ENCODE measurements at regions of chr5 and their contacts with region 1.

Region 1: GRCh38 chr5:141878711-141879425 is 658 bp upstream of the PCDH1 start:
- DNase-seq: peak; percentile 74 to 91
- ATAC-seq: peak; percentile 65 to 89
- H3K4me3 ChIP-seq: peak overlapping the region; percentile 64
- H3K27ac ChIP-seq: peak overlapping the region; percentile 41 to 83; a peak in 4 of 6 replicates
- H3K4me1 ChIP-seq: peaks cover 22% of the 10 kb centered on the region
- CTCF ChIP-seq: peak; percentile 97
- EP300 ChIP-seq: no peak
- POLR2A ChIP-seq: no peak
- RAD21 ChIP-seq: peak; percentile 94

Region 2: GRCh38 chr5:141664732-141665461 is 214.0 kb before region 1 on chr5:
- CTCF ChIA-PET with region 1: interaction called, 30 read pairs
- POLR2A ChIA-PET with region 1: no interaction called
- DNase-seq: peak; percentile 69 to 78
- ATAC-seq: peak; percentile 89 to 97
- H3K4me3 ChIP-seq: no peak overlapping the region
- H3K27ac ChIP-seq: no peak overlapping the region
- H3K4me1 ChIP-seq: peaks cover 4% of the 10 kb centered on the region; the same call in 1 of the 3 replicates
- CTCF ChIP-seq: peak; percentile 91
- EP300 ChIP-seq: no peak
- POLR2A ChIP-seq: no peak
- RAD21 ChIP-seq: peak; percentile 84

Region 3: GRCh38 chr5:141722266-141722665 is 156.6 kb before region 1 on chr5:
- CTCF ChIA-PET with region 1: interaction called, 22 read pairs
- POLR2A ChIA-PET with region 1: no interaction called
- DNase-seq: no peak
- ATAC-seq: no peak
- H3K4me3 ChIP-seq: no peak overlapping the region
- H3K27ac ChIP-seq: no peak overlapping the region
- H3K4me1 ChIP-seq: peaks cover 9% of the 10 kb centered on the region; the same call in 2 of the 3 replicates
- CTCF ChIP-seq: no peak
- EP300 ChIP-seq: no peak
- POLR2A ChIP-seq: no peak
- RAD21 ChIP-seq: no peak

Region 4: DNA sequence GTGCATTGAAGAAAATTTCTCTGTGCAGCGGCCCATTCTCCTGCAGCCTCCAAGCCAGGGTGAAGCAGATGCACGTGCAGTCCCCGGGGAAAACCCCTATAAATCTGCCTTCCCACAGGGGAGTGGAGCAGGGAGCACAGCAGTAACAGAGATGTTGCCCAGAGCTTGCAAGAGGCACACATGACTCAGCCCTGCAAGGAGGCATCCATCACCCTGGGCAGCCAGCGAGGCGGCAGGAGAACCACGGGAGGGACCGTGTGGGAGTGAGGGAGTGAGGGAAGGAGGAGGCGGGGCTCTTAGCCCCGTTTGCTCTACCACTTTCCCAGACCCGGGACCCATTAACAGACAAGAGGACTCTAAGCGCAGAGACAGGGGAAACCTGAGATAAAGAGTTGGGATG is 100.7 kb before region 1 on chr5:
- CTCF ChIA-PET with region 1: interaction called, 22 read pairs
- POLR2A ChIA-PET with region 1: no interaction called
- DNase-seq: peak in 1 of 2 experiments; percentile 17
- ATAC-seq: peak; percentile 64 to 71
- H3K4me3 ChIP-seq: no peak overlapping the region
- H3K27ac ChIP-seq: no peak overlapping the region
- H3K4me1 ChIP-seq: peaks cover 20% of the 10 kb centered on the region; the same call in 2 of the 3 replicates
- CTCF ChIP-seq: no peak
- EP300 ChIP-seq: no peak
- POLR2A ChIP-seq: no peak
- RAD21 ChIP-seq: no peak

Region 5: DNA sequence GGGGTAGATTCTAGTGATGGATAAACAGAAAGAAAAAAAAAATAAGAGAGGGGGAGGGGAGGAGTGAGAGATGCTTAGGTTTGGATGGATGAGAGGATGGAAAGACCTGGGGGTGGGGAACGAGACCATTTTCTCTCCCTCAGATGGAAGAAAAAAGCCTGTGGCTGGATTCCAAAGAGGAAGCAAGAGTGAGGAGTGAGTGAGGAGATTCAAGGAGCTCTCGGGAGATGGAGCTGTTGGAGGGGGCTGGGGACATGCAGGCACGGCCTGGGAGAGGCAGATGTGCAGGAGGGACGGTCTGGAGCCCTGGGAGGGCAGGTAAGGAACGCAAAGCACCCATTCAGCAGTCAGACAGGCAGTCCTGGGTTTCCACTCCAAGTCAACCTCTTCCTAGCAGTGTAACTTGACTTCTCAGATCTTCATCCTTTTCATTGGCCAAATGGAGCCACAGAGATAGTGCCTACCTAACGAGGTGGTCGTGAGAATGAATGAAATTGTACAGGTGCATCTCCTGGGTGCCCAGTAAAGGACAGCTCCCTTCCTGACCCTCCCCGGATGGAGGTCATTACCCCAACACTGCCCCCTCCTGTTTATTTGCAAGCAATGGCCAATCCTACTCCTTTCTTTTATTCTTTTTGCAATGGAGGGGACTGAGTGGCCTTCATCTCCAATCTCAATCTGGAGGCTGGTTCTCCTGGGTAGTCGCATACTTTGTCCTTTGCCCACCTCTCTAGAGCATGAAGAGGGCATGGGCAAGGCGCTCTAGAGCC is 52.9 kb before region 1 on chr5:
- CTCF ChIA-PET with region 1: interaction called, 15 read pairs
- POLR2A ChIA-PET with region 1: no interaction called
- DNase-seq: peak; percentile 38 to 69
- ATAC-seq: peak; percentile 67 to 84; a peak in 3 of 6 replicates
- H3K4me3 ChIP-seq: no peak overlapping the region
- H3K27ac ChIP-seq: no peak overlapping the region
- H3K4me1 ChIP-seq: peaks cover 13% of the 10 kb centered on the region; the same call in 2 of the 3 replicates
- CTCF ChIP-seq: peak; percentile 45
- EP300 ChIP-seq: no peak
- POLR2A ChIP-seq: no peak
- RAD21 ChIP-seq: peak; percentile 27 to 35; a peak in 1 of 5 replicates

Region 6: GRCh38 chr5:141866149-141867120 is 12.4 kb before region 1 on chr5:
- CTCF ChIA-PET with region 1: interaction called, 20 read pairs
- POLR2A ChIA-PET with region 1: no interaction called
- DNase-seq: no peak
- ATAC-seq: no peak
- H3K4me3 ChIP-seq: no peak overlapping the region
- H3K27ac ChIP-seq: no peak overlapping the region
- H3K4me1 ChIP-seq: no peaks in the 10 kb centered on the region
- CTCF ChIP-seq: no peak
- EP300 ChIP-seq: no peak
- POLR2A ChIP-seq: no peak
- RAD21 ChIP-seq: no peak

Region 7: GRCh38 chr5:141923448-141924352 is 44.8 kb after region 1 on chr5 and contains the start of gene DELE1:
- CTCF ChIA-PET with region 1: interaction called, 7 read pairs
- POLR2A ChIA-PET with region 1: interaction called, 11 read pairs
- DNase-seq: peak; percentile 95 to 96
- ATAC-seq: peak; percentile 98 to 99
- H3K4me3 ChIP-seq: peak within 1 kb of the TSS; percentile 89
- H3K27ac ChIP-seq: peak within 1 kb of the TSS; percentile 92 to 99
- H3K4me1 ChIP-seq: peaks cover 12% of the 10 kb centered on the region
- CTCF ChIP-seq: no peak
- EP300 ChIP-seq: no peak
- POLR2A ChIP-seq: peak; percentile 80
- RAD21 ChIP-seq: no peak
- polyA plus RNA-seq, gene DELE1: 60.1 and 72.2 TPM in 2 replicates

Region 8: GRCh38 chr5:142753116-142753631 is 874.3 kb after region 1 on chr5:
- CTCF ChIA-PET with region 1: no interaction called
- POLR2A ChIA-PET with region 1: no interaction called
- DNase-seq: peak in 1 of 2 experiments; percentile 17
- ATAC-seq: peak in 1 of 2 experiments; percentile 31; a peak in 3 of 6 replicates
- H3K4me3 ChIP-seq: no peak overlapping the region
- H3K27ac ChIP-seq: peak overlapping the region in 1 of 2 experiments; percentile 55; a peak in 1 of 6 replicates
- H3K4me1 ChIP-seq: peaks cover 10% of the 10 kb centered on the region; the same call in 1 of the 3 replicates
- CTCF ChIP-seq: no peak
- EP300 ChIP-seq: no peak
- POLR2A ChIP-seq: no peak
- RAD21 ChIP-seq: no peak

Measured in A549 (cell line).